Naive thymus-derived CD4-positive, alpha-beta T cell (primary cell): ENCODE measurements at regions of chr4 and their contacts with region 1.

Region 1: GRCh38 chr4:139015269-139015947 is at the start of gene NOCT:
- DNase-seq: peak; percentile 82 to 92 (median 89)
- ATAC-seq: peak; percentile 94
- H3K4me3 ChIP-seq: peak within 1 kb of the TSS; percentile 65
- H3K4me3 Mint-ChIP-seq: peak within 1 kb of the TSS; percentile 82 to 93 (median 88)
- H3K27ac ChIP-seq: peak within 1 kb of the TSS; percentile 91
- H3K27ac Mint-ChIP-seq: peak within 1 kb of the TSS; percentile 76 to 99 (median 94)
- H3K4me1 ChIP-seq: peaks cover 7 to 10% of the 10 kb centered on the region in 2 donors
- H3K4me1 Mint-ChIP-seq: peaks cover 14 to 44% (median 24%) of the 10 kb centered on the region in 7 donors
- H3K27me3 ChIP-seq: no peaks in the 10 kb centered on the region
- H3K27me3 Mint-ChIP-seq: no peaks in the 10 kb centered on the region
- total RNA-seq, gene NOCT: 1.6 to 33.7 (median 8.8) TPM

Region 2: GRCh38 chr4:138242076-138242833 is 773.2 kb before region 1 on chr4 and contains the start of gene SLC7A11:
- CTCF ChIA-PET with region 1: no interaction called
- POLR2A ChIA-PET with region 1: no interaction called
- intact Hi-C with region 1: loop called in 1 of 2 experiments (anchors 5 kb)
- DNase-seq: peak in 8 of 9 donors; percentile 13 to 61 (median 42)
- ATAC-seq: peak; percentile 94
- H3K4me3 ChIP-seq: peak within 1 kb of the TSS; percentile 35
- H3K4me3 Mint-ChIP-seq: peak within 1 kb of the TSS; percentile 70 to 97 (median 83)
- H3K27ac ChIP-seq: no peak within 1 kb of the TSS
- H3K27ac Mint-ChIP-seq: peak within 1 kb of the TSS; percentile 9 to 96 (median 64)
- H3K4me1 ChIP-seq: peaks cover 0 to 3% of the 10 kb centered on the region in 2 donors
- H3K4me1 Mint-ChIP-seq: peaks cover 0 to 36% (median 21%) of the 10 kb centered on the region in 7 donors
- H3K27me3 ChIP-seq: no peaks in the 10 kb centered on the region
- H3K27me3 Mint-ChIP-seq: no peaks in the 10 kb centered on the region
- total RNA-seq, gene SLC7A11: 0.21 to 2.8 (median 0.54) TPM

Region 3: DNA sequence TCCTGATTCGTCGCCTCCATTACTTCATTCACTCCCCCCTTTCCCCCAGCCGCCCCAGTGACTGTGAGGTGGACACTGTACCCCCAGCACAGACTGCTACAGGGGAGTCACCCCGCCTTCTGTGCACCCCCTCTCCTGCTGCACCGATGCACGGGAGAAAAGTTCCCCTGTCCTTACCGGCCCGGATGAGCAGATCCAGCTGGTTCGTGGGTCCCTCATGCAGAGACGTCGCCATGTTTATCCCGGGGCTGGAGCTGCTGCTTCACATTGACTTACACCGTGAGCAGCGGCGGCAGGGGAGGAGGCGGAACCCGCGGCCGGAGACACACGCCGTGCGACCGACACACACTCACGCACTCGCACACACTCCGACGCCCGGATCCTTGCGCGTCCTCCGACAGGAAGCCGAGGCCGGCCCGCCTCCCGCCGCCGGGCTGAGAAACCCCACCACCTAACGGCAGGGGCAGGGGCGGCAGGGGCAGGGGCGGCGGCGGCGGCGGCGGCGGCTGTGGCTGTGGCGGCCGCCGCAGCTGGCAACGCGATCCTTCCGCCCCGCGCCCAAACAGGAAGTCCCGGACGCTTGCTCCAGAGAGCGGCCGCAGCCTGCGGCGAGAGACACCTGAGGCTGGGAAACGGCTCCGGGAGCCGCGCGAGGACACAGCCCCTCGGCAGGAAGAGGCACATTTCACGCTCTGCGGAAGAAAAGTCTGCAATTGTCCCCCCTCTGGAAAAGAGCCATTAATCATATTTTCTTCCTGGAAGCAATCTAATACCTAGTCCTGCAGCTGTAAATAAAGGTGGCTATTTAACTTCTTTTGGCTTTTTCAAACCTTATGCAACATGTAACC is 68.8 kb after region 1 on chr4:
- CTCF ChIA-PET with region 1: interaction called, 4 read pairs
- POLR2A ChIA-PET with region 1: interaction called, 6 read pairs
- intact Hi-C with region 1: loop called (anchors 1 kb)
- DNase-seq: peak; percentile 54 to 88 (median 84)
- ATAC-seq: peak; percentile 64
- H3K4me3 ChIP-seq: peak overlapping the region; percentile 99
- H3K4me3 Mint-ChIP-seq: peak overlapping the region; percentile 90 to 100 (median 92)
- H3K27ac ChIP-seq: peak overlapping the region; percentile 96
- H3K27ac Mint-ChIP-seq: peak overlapping the region; percentile 85 to 100 (median 96)
- H3K4me1 ChIP-seq: peaks cover 16 to 27% of the 10 kb centered on the region in 2 donors
- H3K4me1 Mint-ChIP-seq: peaks cover 16 to 49% (median 41%) of the 10 kb centered on the region in 7 donors
- H3K27me3 ChIP-seq: no peaks in the 10 kb centered on the region
- H3K27me3 Mint-ChIP-seq: no peaks in the 10 kb centered on the region

Region 4: GRCh38 chr4:139470997-139471665 is 455.7 kb after region 1 on chr4:
- CTCF ChIA-PET with region 1: no interaction called
- POLR2A ChIA-PET with region 1: no interaction called
- intact Hi-C with region 1: no loop called
- DNase-seq: no peak
- ATAC-seq: no peak
- H3K4me3 ChIP-seq: no peak overlapping the region
- H3K4me3 Mint-ChIP-seq: peak overlapping the region in 1 of 10 donors; percentile 16
- H3K27ac ChIP-seq: no peak overlapping the region
- H3K27ac Mint-ChIP-seq: peak overlapping the region in 1 of 9 donors; percentile 4
- H3K4me1 ChIP-seq: no peaks in the 10 kb centered on the region
- H3K4me1 Mint-ChIP-seq: peaks cover 0 to 27% (median 22%) of the 10 kb centered on the region in 7 donors
- H3K27me3 ChIP-seq: no peaks in the 10 kb centered on the region
- H3K27me3 Mint-ChIP-seq: no peaks in the 10 kb centered on the region